ENCODE measurements at regions of chr11 and their contacts with region 1.

Region 1: GRCh38 chr11:121334973-121335710 is 42.6 kb downstream of the SC5D start:
- DNase-seq: no peak
- ATAC-seq: no peak

Region 2: DNA sequence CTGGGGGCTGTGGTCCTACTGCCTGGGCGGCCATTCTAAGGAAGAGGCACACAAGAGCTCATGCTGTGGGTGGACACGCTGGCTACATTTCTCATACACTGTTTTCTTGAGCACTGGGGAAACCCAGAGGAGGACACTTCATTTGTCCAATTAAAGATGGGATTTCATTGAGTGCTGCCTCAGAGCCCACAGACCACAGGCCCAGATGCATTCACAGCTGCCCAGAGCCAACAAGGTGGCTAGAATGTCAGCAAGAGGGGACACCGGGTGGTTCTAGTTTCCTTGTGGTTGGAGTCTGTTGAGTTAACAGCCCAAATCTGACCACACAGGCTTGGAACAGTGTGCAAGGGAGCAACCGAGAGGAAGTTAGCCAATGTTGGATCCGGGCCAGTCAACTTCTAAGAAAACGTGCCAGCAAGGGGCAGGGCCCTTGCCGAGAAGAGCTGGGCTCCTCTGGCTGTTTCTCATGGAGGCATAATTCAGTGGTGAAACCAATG is 82.0 kb after region 1 on chr11:
- intact Hi-C with region 1: loop called (anchors 10 kb)
- DNase-seq: peak; percentile 88
- ATAC-seq: peak; percentile 91

Measured in Right ventricle myocardium superior (tissue), 1 donor.